ENCODE measurements at regions of chr6 and their contacts with region 1.

Region 1: GRCh38 chr6:123802697-123803496 is 768 bp upstream of the NKAIN2 start:
- DNase-seq: peak; percentile 73 to 84
- H3K4me3 ChIP-seq: peak overlapping the region; percentile 7; the same call in 1 of the 2 replicates
- H3K4me3 Mint-ChIP-seq: peak overlapping the region; percentile 69
- H3K27ac Mint-ChIP-seq: no peak overlapping the region
- H3K4me1 ChIP-seq: no peaks in the 10 kb centered on the region
- H3K4me1 Mint-ChIP-seq: no peaks in the 10 kb centered on the region
- H3K27me3 ChIP-seq: no peaks in the 10 kb centered on the region
- H3K27me3 Mint-ChIP-seq: peaks cover 16% of the 10 kb centered on the region
- CTCF ChIP-seq: peak; percentile 84 to 93

Region 2: GRCh38 chr6:123841067-123841896 is 38.4 kb after region 1 on chr6:
- CTCF ChIA-PET with region 1: no interaction called
- POLR2A ChIA-PET with region 1: no interaction called
- intact Hi-C with region 1: loop called (anchors 2 kb)
- DNase-seq: no peak
- H3K4me3 ChIP-seq: no peak overlapping the region
- H3K4me3 Mint-ChIP-seq: no peak overlapping the region
- H3K27ac Mint-ChIP-seq: no peak overlapping the region
- H3K4me1 ChIP-seq: no peaks in the 10 kb centered on the region
- H3K4me1 Mint-ChIP-seq: no peaks in the 10 kb centered on the region
- H3K27me3 ChIP-seq: no peaks in the 10 kb centered on the region
- H3K27me3 Mint-ChIP-seq: peaks cover 19% of the 10 kb centered on the region
- CTCF ChIP-seq: no peak

Region 3: GRCh38 chr6:123965894-123966293 is 163.0 kb after region 1 on chr6:
- CTCF ChIA-PET with region 1: interaction called, 15 read pairs
- POLR2A ChIA-PET with region 1: no interaction called
- intact Hi-C with region 1: loop called (anchors 1 kb)
- DNase-seq: peak in 1 of 2 experiments; percentile 45
- H3K4me3 ChIP-seq: no peak overlapping the region
- H3K4me3 Mint-ChIP-seq: no peak overlapping the region
- H3K27ac Mint-ChIP-seq: no peak overlapping the region
- H3K4me1 ChIP-seq: peaks cover 12% of the 10 kb centered on the region; the same call in 1 of the 2 replicates
- H3K4me1 Mint-ChIP-seq: no peaks in the 10 kb centered on the region
- H3K27me3 ChIP-seq: no peaks in the 10 kb centered on the region
- H3K27me3 Mint-ChIP-seq: peaks cover 2% of the 10 kb centered on the region
- CTCF ChIP-seq: peak; percentile 31 to 58

Region 4: GRCh38 chr6:124795643-124796463 is 993.0 kb after region 1 on chr6:
- CTCF ChIA-PET with region 1: no interaction called
- POLR2A ChIA-PET with region 1: no interaction called
- intact Hi-C with region 1: loop called (anchors 1 kb)
- DNase-seq: peak in 1 of 2 experiments; percentile 6
- H3K4me3 ChIP-seq: no peak overlapping the region
- H3K4me3 Mint-ChIP-seq: no peak overlapping the region
- H3K27ac Mint-ChIP-seq: no peak overlapping the region
- H3K4me1 ChIP-seq: no peaks in the 10 kb centered on the region
- H3K4me1 Mint-ChIP-seq: no peaks in the 10 kb centered on the region
- H3K27me3 ChIP-seq: no peaks in the 10 kb centered on the region
- H3K27me3 Mint-ChIP-seq: peaks cover 18% of the 10 kb centered on the region
- CTCF ChIP-seq: peak; percentile 20 to 39

Measured in Caco-2 (cell line).